ENCODE measurements at regions of chr14 and their contacts with region 1.

Region 1: DNA sequence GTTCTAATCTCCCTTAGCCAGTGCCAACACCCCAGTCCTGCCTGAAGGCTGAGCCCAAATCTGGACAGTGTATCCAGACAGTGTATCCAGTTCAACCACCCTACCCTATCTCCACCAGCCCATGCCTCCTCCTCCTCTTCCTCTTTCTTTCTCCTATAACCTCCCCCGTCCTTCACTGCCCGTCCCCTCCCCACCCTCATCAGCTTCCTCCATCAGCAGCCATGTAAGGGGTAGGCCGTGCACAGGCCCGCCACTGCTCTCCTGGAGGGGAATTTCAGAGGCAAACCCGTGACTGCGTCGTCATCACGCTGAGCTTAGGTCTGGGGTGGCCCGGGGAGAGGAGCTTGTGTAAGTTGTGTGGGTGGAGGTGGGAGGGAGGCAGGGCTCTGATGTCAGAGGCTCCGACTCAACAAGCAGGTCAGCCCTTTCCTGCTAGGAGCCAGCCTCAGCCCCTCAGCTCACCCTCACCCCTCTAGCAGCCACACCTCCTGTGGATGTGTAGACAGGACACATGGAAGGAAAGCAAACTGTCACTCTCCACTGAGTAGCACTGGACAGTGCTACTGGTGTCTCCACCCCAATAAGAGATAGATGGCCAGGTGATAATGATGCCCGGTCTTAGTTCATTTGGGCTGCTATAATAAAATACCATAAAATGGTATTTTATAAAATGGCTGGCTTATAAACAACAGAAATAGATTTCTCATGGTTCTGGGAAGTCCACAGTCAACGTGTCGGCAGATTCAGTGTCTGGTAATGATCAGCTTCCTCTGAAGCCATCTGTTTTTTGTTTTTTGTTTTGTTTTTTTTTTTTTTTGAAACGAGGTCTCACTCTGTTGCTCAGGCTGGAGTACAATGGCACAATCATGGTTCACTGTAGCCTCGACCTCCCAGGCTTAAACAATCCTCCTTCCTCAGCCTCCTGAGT is 50.5 kb downstream of the IRF2BPL start:
- H3K4me3 Mint-ChIP-seq: no peak overlapping the region
- H3K27ac Mint-ChIP-seq: peak overlapping the region; percentile 90
- H3K4me1 Mint-ChIP-seq: peaks cover 37% of the 10 kb centered on the region
- H3K27me3 Mint-ChIP-seq: peaks cover 1% of the 10 kb centered on the region

Region 2: DNA sequence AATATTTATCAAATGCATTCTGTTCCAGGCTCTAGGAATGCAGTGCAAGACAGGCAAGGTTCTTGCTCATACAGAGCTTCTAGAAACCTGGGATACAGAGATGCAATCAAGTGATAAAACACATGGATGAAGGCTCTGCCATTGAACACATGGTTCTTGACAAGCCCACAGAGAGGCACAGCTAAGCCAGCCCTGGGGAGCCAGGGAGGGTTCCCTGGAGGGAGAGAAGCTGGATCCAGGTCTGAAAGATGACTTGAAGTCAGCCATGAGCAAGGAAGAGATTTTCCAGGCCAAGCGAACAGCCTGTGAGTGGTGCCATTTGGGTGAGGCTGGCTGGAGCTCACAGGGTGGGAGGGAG is 15.8 kb before region 1 on chr14:
- intact Hi-C with region 1: loop called (anchors 2 kb)
- H3K4me3 Mint-ChIP-seq: peak overlapping the region; percentile 74
- H3K27ac Mint-ChIP-seq: peak overlapping the region; percentile 87
- H3K4me1 Mint-ChIP-seq: peaks cover 67% of the 10 kb centered on the region
- H3K27me3 Mint-ChIP-seq: peaks cover 7% of the 10 kb centered on the region

Region 3: GRCh38 chr14:77040059-77040740 is 62.1 kb after region 1 on chr14:
- intact Hi-C with region 1: no loop called
- H3K4me3 Mint-ChIP-seq: peak overlapping the region; percentile 42
- H3K27ac Mint-ChIP-seq: peak overlapping the region; percentile 92
- H3K4me1 Mint-ChIP-seq: peaks cover 89% of the 10 kb centered on the region
- H3K27me3 Mint-ChIP-seq: no peaks in the 10 kb centered on the region

Measured in dendritic cell treated with granulocyte-macrophage colony-stimulating factor and Interleukin-4, amounts not matched to agents 40 ng/mL and 50 ng/mL, for 4 days (primary cell).